ENCODE measurements at regions of chr6 and their contacts with region 1.

Region 1: DNA sequence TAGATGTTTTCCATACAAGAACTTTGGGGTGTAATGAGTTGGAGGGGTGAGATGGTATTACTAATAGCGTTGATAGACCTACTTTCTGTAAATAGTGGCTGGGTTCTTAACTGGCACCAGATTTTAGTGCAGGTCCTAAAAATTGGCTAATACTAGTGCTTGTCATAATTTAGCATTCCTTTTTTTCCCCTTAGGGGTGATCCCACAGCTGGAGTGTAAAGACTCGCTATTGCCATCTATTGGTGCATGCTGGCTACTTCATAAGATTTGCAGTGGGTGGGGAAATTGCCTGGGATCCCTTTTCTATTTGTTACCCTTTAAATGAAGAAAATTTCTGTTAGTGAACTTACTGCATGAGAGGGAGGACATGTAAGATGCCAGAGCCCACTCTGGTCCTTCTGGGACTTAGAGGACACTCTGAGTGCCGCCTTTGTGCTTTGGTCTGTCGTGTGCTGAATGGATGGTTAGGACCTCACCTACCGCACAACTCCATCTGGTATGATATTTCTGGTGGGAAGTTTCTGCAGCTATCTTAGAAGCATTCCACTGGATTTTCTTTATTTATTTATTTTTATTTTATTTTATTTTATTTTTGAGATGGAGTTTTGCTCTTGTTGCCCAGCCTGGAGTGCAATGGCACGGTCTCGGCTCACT is 195.5 kb downstream of the JARID2 start:
- DNase-seq: peak in 3 of 5 donors; percentile 35 to 42 (median 37)
- ATAC-seq: peak in 3 of 4 donors; percentile 71 to 75 (median 74)
- H3K4me3 ChIP-seq: no peak overlapping the region
- H3K27ac ChIP-seq: no peak overlapping the region
- H3K4me1 ChIP-seq: peaks cover 3 to 87% (median 60%) of the 10 kb centered on the region in 12 donors
- H3K27me3 ChIP-seq: no peaks in the 10 kb centered on the region
- CTCF ChIP-seq: peak; percentile 67 to 92 (median 82)
- POLR2A ChIP-seq: no peak

Region 2: GRCh38 chr6:13924146-13924948 is 1517.0 kb before region 1 on chr6:
- intact Hi-C with region 1: loop called in 1 of 10 experiments (anchors 5 kb)
- DNase-seq: peak in 4 of 5 donors; percentile 25 to 68 (median 38)
- ATAC-seq: peak in 3 of 4 donors; percentile 45 to 76 (median 47)
- H3K4me3 ChIP-seq: peak overlapping the region in 11 of 12 donors; percentile 10 to 57 (median 42)
- H3K27ac ChIP-seq: no peak overlapping the region
- H3K4me1 ChIP-seq: peaks cover 0 to 19% (median 5%) of the 10 kb centered on the region in 12 donors
- H3K27me3 ChIP-seq: peaks cover 18 to 69% (median 44%) of the 10 kb centered on the region in 9 donors
- CTCF ChIP-seq: no peak
- POLR2A ChIP-seq: no peak

Region 3: GRCh38 chr6:15254070-15254841 is 187.1 kb before region 1 on chr6:
- intact Hi-C with region 1: loop called in 7 of 10 experiments (anchors 5 kb)
- DNase-seq: no peak
- ATAC-seq: no peak
- H3K4me3 ChIP-seq: no peak overlapping the region
- H3K27ac ChIP-seq: peak overlapping the region in 1 of 12 donors; percentile 47
- H3K4me1 ChIP-seq: peaks cover 0 to 95% (median 45%) of the 10 kb centered on the region in 12 donors
- H3K27me3 ChIP-seq: no peaks in the 10 kb centered on the region
- CTCF ChIP-seq: peak in 1 of 12 donors; percentile 11
- POLR2A ChIP-seq: no peak

Region 4: DNA sequence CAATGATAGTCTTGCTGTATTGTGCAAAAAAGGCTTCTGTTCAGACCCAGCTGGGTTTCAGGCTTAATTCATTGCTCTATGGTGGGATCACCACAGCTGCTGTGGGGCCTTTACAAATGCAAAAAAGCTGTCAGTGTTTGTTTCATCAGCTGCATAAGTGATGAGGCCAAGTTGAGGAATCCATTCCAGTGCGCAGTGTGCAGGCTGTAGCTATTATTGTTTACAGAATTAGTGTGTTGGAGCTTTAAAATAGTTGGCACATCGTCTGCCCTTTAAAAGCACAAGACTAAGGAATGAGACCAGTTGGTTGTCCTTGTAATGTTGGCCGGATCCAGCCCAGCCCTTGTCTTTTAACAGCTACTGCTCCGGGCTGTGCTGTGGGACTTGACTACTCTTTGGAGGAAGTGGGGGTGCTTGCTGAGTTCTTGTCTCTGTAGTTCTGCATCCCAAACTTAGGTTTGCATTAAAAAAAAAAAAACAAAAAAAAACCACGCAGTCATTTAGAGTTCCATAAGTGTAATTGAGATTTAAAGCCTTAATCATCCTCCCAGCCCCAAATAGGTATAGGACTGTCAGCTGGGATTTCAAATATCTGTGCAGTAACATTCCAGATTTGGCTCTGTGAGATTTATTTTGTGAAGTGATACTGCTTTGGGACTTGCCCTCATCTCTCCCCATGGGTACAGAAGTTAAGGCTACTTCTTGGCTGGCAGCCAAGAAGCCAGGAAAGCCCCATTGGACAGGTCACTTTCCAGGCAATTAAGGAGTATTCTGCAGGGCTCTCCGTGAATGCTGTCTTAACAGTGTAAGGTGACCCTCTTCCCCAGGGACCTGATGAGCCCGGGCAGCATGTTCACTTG is 176.2 kb before region 1 on chr6:
- intact Hi-C with region 1: loop called in 1 of 10 experiments (anchors 5 kb)
- DNase-seq: peak in 4 of 5 donors; percentile 42 to 79 (median 46)
- ATAC-seq: peak; percentile 65 to 82 (median 72)
- H3K4me3 ChIP-seq: peak overlapping the region in 2 of 12 donors; percentile 5 to 17
- H3K27ac ChIP-seq: peak overlapping the region in 11 of 12 donors; percentile 31 to 74 (median 58)
- H3K4me1 ChIP-seq: peaks cover 26 to 84% (median 72%) of the 10 kb centered on the region in 12 donors
- H3K27me3 ChIP-seq: no peaks in the 10 kb centered on the region
- CTCF ChIP-seq: no peak
- POLR2A ChIP-seq: no peak

Region 5: GRCh38 chr6:15389765-15390723 is 51.3 kb before region 1 on chr6:
- intact Hi-C with region 1: loop called in 2 of 10 experiments (anchors 5 kb)
- DNase-seq: no peak
- ATAC-seq: peak; percentile 4 to 60 (median 53)
- H3K4me3 ChIP-seq: peak overlapping the region in 1 of 12 donors; percentile 0
- H3K27ac ChIP-seq: peak overlapping the region in 10 of 12 donors; percentile 1 to 70 (median 43)
- H3K4me1 ChIP-seq: peaks cover 0 to 68% (median 44%) of the 10 kb centered on the region in 12 donors
- H3K27me3 ChIP-seq: no peaks in the 10 kb centered on the region
- CTCF ChIP-seq: peak; percentile 42 to 78 (median 64)
- POLR2A ChIP-seq: no peak

Region 6: GRCh38 chr6:15399641-15400470 is 41.5 kb before region 1 on chr6:
- intact Hi-C with region 1: loop called in 4 of 10 experiments (anchors 5 kb)
- DNase-seq: peak; percentile 77 to 86 (median 82)
- ATAC-seq: peak; percentile 79 to 89 (median 86)
- H3K4me3 ChIP-seq: peak overlapping the region in 10 of 12 donors; percentile 32 to 57 (median 50)
- H3K27ac ChIP-seq: peak overlapping the region in 11 of 12 donors; percentile 43 to 84 (median 71)
- H3K4me1 ChIP-seq: peaks cover 4 to 72% (median 53%) of the 10 kb centered on the region in 12 donors
- H3K27me3 ChIP-seq: no peaks in the 10 kb centered on the region
- CTCF ChIP-seq: no peak
- POLR2A ChIP-seq: no peak

Region 7: DNA sequence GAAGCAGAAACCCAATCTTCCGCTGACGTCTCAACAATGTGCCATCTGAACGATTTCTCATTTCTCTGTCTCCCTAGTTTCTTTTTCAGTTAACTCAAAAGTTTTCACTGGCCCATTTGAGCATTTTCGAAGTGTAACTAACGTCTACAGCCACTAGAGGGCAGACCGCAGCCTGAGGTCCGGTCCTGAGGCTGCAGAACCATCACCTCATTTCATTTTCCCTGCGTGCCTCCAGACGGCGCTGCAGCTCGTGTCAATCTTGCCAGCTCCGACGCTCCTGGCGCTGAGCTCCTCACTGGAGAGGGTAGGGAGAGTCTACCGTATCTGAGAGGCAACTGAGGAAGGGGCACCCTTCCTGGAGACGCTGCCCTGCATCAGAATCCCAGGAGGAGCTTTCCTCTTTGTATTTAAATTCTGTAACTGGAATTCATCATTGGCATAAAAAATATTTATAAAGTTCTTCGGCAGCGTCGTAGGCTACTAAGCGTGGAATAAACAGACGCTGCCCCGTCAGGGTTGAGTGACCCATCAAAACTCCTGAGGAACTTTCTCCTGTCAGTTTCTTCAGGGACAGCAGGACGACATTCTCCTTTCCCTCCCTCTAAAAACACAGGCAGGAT is 250.0 kb after region 1 on chr6:
- intact Hi-C with region 1: no loop called
- DNase-seq: peak; percentile 84 to 91 (median 87)
- ATAC-seq: peak; percentile 82 to 100 (median 96)
- H3K4me3 ChIP-seq: peak overlapping the region in 10 of 12 donors; percentile 13 to 56 (median 32)
- H3K27ac ChIP-seq: peak overlapping the region in 3 of 12 donors; percentile 37 to 51 (median 43)
- H3K4me1 ChIP-seq: peaks cover 0 to 17% (median 9%) of the 10 kb centered on the region in 12 donors
- H3K27me3 ChIP-seq: no peaks in the 10 kb centered on the region
- CTCF ChIP-seq: peak; percentile 98 to 100 (median 100)
- POLR2A ChIP-seq: no peak

Measured in heart left ventricle (tissue), 16 donors.